Left ventricle myocardium superior (tissue), 1 donor: ENCODE measurements at regions of chr1 and their contacts with region 1.

Region 1: GRCh38 chr1:36342481-36343478 is 19.3 kb upstream of the EVA1B start:
- DNase-seq: peak; percentile 71
- ATAC-seq: peak; percentile 77

Region 2: DNA sequence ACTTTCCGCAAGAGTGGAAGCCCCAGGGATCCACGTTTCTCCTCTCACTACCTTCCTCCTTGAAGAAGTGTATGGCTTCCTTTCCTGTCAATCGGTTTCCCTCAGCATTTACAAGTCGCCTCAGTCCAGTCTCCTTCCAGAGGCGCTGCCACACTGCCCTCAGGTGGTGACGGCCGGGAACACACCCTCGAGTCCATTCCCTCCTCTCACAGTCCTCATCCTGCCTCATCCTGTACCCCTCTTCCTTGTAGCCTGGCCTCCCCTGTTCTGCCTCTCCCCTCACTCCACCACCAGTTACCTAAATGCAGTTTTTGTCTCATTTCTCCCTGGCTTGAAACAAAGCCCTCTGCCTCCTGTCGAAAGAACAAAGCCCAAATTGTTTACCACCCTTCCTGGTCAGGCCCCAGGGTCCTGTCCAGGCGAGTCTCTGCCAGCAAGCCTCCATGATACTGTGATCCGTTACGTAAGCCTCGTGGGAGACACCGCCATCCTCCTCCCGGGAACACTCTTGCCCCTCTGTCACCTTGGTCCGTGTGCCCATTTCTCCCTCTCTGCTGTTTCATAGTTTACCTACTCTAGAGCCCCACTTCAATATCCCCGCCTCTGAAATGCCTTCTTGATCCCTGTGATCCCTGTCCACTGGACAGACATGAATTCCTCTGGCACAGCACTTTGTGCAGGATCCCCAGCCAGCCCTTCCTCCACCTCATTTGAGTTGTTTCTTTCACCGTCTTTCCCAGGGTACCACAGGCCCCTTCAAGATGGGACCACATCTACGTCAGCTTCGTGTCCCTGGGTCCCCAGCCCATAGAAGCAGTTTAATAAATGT is 78.3 kb after region 1 on chr1:
- intact Hi-C with region 1: loop called (anchors 5 kb)
- DNase-seq: peak; percentile 92
- ATAC-seq: peak; percentile 94